Heart left ventricle (tissue), 16 donors: ENCODE measurements at regions of chr3 and their contacts with region 1.

Region 1: DNA sequence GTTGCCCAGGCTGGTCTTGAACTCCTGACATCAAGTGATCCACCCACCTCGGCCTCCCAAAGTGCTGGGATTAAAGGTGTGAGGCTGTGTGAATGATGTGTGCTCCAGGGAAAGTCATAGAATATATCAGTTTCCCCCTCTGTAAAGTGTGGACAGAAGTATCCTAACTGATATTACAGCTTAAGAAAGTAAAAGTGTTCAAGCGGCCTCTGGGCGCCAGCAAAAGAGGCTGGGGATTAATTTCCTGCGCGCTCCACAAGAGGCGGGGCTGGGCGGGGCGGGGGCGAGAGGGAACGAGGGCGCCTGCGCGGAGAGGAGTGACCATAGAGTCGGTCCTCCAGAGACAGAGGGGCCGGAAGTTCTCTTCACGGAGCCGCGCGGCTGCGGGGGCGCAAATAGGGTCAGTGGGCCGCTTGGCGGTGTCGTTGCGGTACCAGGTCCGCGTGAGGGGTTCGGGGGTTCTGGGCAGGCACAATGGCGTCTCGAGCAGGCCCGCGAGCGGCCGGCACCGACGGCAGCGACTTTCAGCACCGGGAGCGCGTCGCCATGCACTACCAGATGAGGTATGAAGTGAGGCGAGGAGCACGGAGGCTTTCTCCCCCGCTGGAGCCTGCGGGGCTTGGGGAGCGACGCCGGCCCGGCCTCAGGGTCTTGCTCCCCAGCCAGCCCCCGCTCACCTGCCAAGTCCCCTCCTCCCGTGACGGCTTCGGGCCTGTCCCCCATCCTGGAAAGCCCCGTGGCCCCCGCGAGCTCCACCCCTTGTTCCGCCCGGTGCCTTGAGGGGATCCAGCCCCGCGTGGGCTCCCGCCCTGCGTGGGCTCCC is at the start of gene JAGN1:
- DNase-seq: peak; percentile 91 to 93 (median 92)
- ATAC-seq: peak; percentile 95 to 99 (median 98)
- H3K4me3 ChIP-seq: peak within 1 kb of the TSS; percentile 61 to 100 (median 94)
- H3K27ac ChIP-seq: peak within 1 kb of the TSS; percentile 87 to 98 (median 96)
- H3K4me1 ChIP-seq: peaks cover 0 to 27% (median 13%) of the 10 kb centered on the region in 12 donors
- H3K27me3 ChIP-seq: no peaks in the 10 kb centered on the region
- CTCF ChIP-seq: peak in 3 of 12 donors; percentile 19 to 24 (median 21)
- POLR2A ChIP-seq: peak in 1 of 2 donors; percentile 88
- total RNA-seq, gene JAGN1: 15.1 to 40.3 (median 21.2) TPM

Region 2: DNA sequence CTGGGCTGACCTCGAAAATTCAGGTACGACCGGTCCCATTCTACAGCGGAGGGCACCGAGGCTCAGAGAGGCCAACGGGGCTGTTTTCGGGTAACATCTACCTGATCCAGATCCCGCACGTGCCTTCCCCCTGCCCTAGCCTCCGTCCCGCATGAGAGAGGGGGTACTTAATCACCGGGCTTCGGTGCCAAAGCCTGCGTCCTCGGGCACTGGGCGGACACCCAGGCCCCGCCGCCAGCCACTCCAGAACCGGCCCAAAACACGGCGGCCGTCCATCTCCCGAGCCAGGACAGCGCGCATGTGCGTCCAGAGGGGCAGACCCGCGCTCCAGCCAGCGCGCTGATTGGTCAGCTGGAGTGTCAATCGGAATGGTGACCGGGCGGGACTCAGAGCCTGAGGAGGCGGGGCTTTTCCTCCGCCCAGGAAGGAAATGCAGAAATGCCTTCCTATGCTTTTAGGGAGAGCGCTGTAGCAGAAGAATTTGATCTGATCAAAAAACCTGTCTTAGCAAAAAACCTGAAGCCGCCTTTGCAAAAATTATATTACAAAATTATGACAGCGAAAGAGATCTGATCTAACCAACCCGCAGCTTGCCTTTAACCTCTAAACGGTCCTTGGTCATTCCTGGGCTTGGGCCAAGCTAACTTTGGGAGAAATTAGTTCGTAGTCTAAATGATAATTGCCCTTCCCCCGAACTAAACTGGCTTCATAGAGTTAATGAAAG is 46.6 kb before region 1 on chr3 and contains the start of gene RPUSD3:
- intact Hi-C with region 1: loop called in 1 of 10 experiments (anchors 2 kb)
- DNase-seq: peak; percentile 98 to 100 (median 99)
- ATAC-seq: peak; percentile 99 to 100 (median 99)
- H3K4me3 ChIP-seq: peak within 1 kb of the TSS; percentile 43 to 94 (median 76)
- H3K27ac ChIP-seq: peak within 1 kb of the TSS; percentile 43 to 87 (median 86)
- H3K4me1 ChIP-seq: peaks cover 0 to 21% (median 8%) of the 10 kb centered on the region in 12 donors
- H3K27me3 ChIP-seq: no peaks in the 10 kb centered on the region
- CTCF ChIP-seq: no peak
- POLR2A ChIP-seq: peak in 1 of 2 donors; percentile 87
- total RNA-seq, gene RPUSD3: 25.8 to 68.6 (median 31.1) TPM

Region 3: DNA sequence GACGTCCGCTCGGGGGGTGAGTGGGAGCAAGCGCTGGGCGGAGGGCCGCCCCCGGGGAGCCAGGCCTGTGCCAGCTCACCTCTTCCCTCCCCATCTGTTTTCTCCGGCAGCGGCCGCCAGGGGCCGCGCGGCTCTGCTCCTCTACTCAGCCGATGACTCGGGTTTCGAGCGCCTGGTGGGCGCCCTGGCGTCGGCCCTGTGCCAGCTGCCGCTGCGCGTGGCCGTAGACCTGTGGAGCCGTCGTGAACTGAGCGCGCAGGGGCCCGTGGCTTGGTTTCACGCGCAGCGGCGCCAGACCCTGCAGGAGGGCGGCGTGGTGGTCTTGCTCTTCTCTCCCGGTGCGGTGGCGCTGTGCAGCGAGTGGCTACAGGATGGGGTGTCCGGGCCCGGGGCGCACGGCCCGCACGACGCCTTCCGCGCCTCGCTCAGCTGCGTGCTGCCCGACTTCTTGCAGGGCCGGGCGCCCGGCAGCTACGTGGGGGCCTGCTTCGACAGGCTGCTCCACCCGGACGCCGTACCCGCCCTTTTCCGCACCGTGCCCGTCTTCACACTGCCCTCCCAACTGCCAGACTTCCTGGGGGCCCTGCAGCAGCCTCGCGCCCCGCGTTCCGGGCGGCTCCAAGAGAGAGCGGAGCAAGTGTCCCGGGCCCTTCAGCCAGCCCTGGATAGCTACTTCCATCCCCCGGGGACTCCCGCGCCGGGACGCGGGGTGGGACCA is 42.5 kb after region 1 on chr3:
- intact Hi-C with region 1: loop called in 1 of 10 experiments (anchors 1 kb)
- DNase-seq: peak; percentile 80 to 91 (median 85)
- ATAC-seq: peak; percentile 41 to 86 (median 78)
- H3K4me3 ChIP-seq: peak overlapping the region; percentile 35 to 92 (median 74)
- H3K27ac ChIP-seq: peak overlapping the region; percentile 74 to 98 (median 93)
- H3K4me1 ChIP-seq: peaks cover 7 to 40% (median 23%) of the 10 kb centered on the region in 12 donors
- H3K27me3 ChIP-seq: no peaks in the 10 kb centered on the region
- CTCF ChIP-seq: peak; percentile 48 to 84 (median 66)
- POLR2A ChIP-seq: peak in 1 of 2 donors; percentile 5